ENCODE measurements at regions of chr17 and their contacts with region 1.

Region 1: GRCh38 chr17:4004517-4005295 is 40.5 kb upstream of the ATP2A3 start:
- DNase-seq: peak; percentile 58 to 68 (median 62)
- ATAC-seq: peak; percentile 65
- H3K4me3 ChIP-seq: no peak overlapping the region
- H3K27ac ChIP-seq: peak overlapping the region in 3 of 4 donors; percentile 49 to 72 (median 68)
- H3K4me1 ChIP-seq: peaks cover 20% of the 10 kb centered on the region
- H3K27me3 ChIP-seq: no peaks in the 10 kb centered on the region
- CTCF ChIP-seq: peak; percentile 71 to 95 (median 87)
- POLR2A ChIP-seq: no peak

Region 2: DNA sequence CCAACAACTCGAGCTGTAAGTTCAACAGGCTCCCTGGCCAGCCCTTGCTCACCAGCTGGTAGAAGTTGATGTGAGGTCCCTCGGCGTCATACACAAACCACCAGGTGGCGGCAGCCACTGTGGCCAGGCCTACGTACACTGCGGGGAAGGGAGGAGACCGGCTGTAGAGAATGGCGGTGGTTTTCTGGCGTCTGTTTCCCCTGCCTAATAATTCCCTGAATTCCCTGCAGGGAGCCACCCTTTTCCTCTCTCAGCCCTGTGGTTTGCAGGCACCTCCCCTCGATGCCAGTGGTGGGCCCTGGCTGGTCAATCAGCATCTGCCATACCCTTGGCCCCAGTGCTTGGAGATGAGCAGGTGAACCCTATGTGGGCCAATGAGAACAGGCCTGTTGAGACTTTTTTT is 69.6 kb before region 1 on chr17:
- intact Hi-C with region 1: loop called (anchors 10 kb)
- DNase-seq: peak; percentile 75 to 80 (median 78)
- ATAC-seq: peak; percentile 90
- H3K4me3 ChIP-seq: no peak overlapping the region
- H3K27ac ChIP-seq: no peak overlapping the region
- H3K4me1 ChIP-seq: no peaks in the 10 kb centered on the region
- H3K27me3 ChIP-seq: no peaks in the 10 kb centered on the region
- CTCF ChIP-seq: peak; percentile 53 to 85 (median 71)
- POLR2A ChIP-seq: no peak

Region 3: DNA sequence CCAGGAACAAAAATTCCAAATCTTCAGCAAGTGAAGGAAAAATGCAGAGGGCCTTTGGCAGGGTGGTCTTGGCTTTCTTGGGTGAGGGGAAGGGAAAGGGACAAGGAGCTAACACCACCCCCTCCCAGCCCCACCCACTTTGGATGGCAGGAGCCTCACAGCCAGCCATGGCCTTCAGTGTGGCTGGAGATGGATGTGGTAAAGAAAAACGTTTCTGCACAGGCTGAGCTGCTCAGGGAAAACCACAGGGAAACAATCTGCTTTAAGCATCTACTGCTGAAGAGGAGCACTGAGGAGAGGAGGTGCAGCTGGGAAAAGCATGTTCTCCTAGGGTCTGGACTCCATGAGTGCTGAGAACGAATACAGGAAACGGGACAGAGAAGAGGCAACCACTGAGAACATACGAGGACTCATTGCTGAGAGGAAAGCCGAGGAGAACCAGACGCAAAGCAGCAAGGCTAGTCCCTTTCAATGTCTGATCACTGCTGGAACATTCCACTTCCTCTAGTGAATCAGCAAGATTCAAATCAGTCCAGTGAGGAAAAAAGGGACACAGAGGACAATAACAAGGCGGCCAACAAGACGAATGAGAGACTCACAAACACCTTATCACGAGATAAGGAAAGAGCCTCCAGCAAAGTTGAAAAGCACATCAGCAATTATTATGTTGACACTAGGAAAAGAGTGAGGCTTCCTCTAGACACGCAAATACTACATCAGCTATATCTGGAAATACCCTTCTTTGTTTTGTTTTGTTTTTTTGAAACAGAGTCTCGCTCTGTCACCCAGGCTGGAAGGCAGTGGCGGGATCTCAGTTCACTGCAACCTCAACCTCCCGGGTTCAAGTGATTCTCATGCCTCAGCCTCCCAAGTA is 96.4 kb after region 1 on chr17:
- intact Hi-C with region 1: no loop called
- DNase-seq: peak in 1 of 4 donors; percentile 10
- ATAC-seq: peak; percentile 33
- H3K4me3 ChIP-seq: no peak overlapping the region
- H3K27ac ChIP-seq: peak overlapping the region in 3 of 4 donors; percentile 2 to 45 (median 34)
- H3K4me1 ChIP-seq: peaks cover 4% of the 10 kb centered on the region
- H3K27me3 ChIP-seq: no peaks in the 10 kb centered on the region
- CTCF ChIP-seq: no peak
- POLR2A ChIP-seq: no peak